ENCODE measurements at regions of chr11 and their contacts with region 1.

Region 1: DNA sequence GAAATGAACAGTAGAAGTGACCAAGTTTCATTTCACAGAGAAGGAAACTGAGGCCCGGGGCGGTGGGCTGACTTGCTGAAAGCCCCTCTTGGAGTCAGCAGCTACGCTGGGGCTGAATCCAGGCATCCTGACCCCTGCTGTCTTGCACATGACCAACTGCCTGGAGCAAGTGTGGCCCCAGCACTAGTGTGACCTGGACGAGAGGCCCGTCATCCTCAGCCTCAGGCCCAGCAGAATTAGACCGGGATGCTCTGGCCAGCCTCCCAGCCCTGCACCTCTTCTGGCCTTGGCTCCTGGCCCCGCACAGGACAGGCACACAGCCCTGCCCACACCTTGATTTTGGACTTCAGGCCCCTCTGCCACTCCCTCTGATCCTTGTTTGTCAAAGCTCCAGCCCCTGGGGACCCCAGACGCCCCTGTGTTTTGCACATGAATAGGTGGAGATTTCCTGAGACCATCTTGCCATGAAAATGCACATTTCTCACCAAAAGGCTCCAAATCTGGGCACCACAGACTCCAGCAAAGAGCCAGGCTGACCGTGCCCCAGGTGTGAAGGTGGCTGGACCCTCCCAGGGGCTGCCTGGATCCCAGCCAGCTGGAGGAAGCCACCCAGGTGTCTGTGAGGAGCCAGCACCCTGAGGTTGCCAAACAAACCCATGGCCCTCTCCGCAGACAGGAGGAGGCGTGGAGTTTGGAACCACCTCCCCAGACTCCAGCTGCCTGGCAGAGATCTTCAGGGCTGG is 24.9 kb downstream of the FGF4 start:
- DNase-seq: no peak
- H3K4me3 ChIP-seq: no peak overlapping the region
- H3K27ac ChIP-seq: no peak overlapping the region
- H3K4me1 ChIP-seq: no peaks in the 10 kb centered on the region
- H3K27me3 ChIP-seq: no peaks in the 10 kb centered on the region
- CTCF ChIP-seq: no peak

Region 2: DNA sequence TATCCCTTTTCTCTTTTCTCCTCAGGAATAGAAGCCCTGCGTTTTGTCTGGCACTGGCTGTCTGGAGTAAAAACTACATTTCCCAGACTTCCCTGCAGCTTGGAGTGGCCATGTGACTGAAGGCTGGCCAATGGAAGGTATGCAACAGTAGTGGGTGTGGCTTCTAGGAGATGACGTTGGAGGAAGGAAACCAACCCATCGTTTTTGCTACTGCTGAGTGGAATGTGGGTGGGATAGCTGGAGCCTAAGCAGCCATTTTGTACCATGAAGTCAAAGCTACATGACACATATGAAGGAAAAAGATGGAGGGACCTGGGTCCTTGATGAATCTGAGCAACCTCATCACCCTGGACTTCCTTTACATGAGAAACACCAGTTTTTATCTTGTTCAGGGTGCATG is 49.3 kb after region 1 on chr11:
- CTCF ChIA-PET with region 1: no interaction called
- POLR2A ChIA-PET with region 1: no interaction called
- intact Hi-C with region 1: no loop called
- DNase-seq: peak; percentile 73
- H3K4me3 ChIP-seq: no peak overlapping the region
- H3K27ac ChIP-seq: no peak overlapping the region
- H3K4me1 ChIP-seq: no peaks in the 10 kb centered on the region
- H3K27me3 ChIP-seq: no peaks in the 10 kb centered on the region
- CTCF ChIP-seq: no peak

Region 3: DNA sequence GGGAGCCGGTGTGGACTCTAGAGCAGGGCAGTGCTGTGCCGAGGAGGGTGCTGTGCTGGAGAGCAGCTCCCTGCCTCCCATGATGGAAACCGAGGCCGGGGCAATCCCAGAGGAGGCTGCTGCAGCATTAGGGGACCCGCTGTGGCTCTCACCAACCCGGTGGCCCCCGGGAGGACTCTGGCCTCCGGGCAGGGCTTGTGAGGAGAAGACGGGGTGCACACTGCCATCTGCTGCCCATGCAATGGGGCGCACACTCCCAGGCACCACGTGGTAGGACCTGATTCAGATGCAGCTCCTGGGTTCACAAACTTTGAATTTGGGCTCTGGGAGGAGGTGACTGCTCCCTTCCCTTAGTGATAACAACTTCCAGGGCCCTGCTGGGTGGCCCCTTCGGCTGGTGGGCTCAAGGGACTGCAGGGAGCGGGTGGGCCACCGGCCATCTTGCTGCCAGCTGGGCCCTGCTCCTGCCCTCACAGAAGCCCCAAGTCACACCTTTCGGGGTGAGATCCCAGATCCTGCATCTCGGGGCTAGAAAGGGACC is 162.7 kb after region 1 on chr11:
- CTCF ChIA-PET with region 1: interaction called, 16 read pairs
- POLR2A ChIA-PET with region 1: no interaction called
- intact Hi-C with region 1: no loop called
- DNase-seq: peak; percentile 44
- H3K4me3 ChIP-seq: no peak overlapping the region
- H3K27ac ChIP-seq: no peak overlapping the region
- H3K4me1 ChIP-seq: peaks cover 6% of the 10 kb centered on the region
- H3K27me3 ChIP-seq: no peaks in the 10 kb centered on the region
- CTCF ChIP-seq: peak; percentile 62